Activated CD4-positive, alpha-beta T cell treated with anti-CD3 and anti-CD28 coated beads, Interleukin-2, amount 10 ng/mL, durations not matched to agents 24 days and 14 days (primary cell): ENCODE measurements at regions of chr15 and their contacts with region 1.

Region 1: DNA sequence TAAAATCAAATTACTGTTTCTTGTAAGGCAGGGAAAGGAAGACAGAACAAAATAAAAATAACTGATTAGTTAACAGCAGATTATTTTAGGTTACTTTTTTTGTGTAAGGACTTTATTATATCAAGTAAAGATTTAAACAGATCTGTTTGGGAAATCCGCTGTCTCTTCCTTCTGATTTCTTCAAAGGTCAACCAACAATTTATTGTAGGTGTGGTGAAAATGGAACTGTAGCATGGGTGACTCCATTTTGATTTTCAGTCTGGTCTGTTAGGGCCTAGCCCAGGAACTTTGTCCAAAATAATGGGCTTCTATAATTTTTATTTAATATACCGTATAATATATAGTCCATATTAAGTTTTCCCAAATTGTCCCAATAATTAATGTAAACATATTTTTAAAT is 13.5 kb upstream of the IDH2 start:
- DNase-seq: no peak
- H3K4me3 Mint-ChIP-seq: no peak overlapping the region
- H3K27ac Mint-ChIP-seq: no peak overlapping the region
- H3K4me1 Mint-ChIP-seq: no peaks in the 10 kb centered on the region
- H3K27me3 Mint-ChIP-seq: peaks cover 13% of the 10 kb centered on the region

Region 2: DNA sequence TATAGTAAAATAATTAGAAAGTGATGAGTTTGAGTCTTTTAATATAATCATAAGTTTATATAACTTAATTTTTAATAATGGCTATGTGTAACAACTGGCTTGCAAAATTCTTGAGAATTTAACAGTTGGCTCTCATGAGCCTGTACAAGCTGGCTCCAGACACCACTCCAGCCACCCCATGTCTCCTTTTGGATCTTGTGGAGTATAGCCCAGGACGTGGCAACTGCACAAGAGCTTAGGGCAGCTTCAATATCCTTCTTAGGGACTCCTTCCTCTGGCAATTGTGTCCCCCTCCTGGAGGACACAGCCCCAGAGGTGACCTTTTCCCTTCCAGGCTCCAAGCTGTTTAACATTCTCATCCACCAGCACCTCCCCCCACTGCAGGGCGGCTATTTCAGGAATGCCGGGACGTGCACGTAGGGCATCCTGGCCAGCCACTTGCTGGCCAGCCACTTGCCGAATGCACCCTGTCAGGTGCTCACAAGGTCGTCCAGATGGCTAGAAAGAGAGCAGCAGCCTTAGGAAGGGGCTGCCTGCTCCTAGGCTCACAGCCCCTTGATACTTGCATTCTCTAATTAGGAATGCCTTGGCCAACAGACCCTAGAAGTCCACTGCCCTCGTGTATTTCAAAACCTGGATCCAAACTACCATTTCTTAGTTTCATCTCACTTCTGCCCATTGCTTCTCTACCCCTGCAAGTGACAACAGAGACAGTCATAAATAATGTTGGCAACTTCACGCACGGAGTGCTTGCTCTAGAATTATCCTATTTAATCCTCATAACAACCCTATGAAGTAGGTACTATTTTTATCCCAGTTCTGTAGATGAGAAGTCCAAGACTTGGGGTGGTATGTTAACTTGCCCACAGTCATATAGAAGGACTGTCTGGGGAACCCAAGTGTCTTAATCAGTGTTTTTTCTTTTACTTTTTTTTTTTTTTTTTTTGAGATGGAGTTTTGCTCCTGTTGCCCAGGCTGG is 11.0 kb after region 1 on chr15:
- intact Hi-C with region 1: loop called (anchors 1 kb)
- DNase-seq: no peak
- H3K4me3 Mint-ChIP-seq: no peak overlapping the region
- H3K27ac Mint-ChIP-seq: no peak overlapping the region
- H3K4me1 Mint-ChIP-seq: no peaks in the 10 kb centered on the region
- H3K27me3 Mint-ChIP-seq: peaks cover 5% of the 10 kb centered on the region